Dendritic cell treated with granulocyte-macrophage colony-stimulating factor and Interleukin-4, amounts not matched to agents 40 ng/mL and 50 ng/mL, for 4 days (primary cell): ENCODE measurements at regions of chr3 and their contacts with region 1.

Region 1: GRCh38 chr3:107574650-107575049 is 51.9 kb downstream of the BBX start:
- H3K4me3 Mint-ChIP-seq: no peak overlapping the region
- H3K27ac Mint-ChIP-seq: no peak overlapping the region
- H3K4me1 Mint-ChIP-seq: peaks cover 11% of the 10 kb centered on the region
- H3K27me3 Mint-ChIP-seq: no peaks in the 10 kb centered on the region

Region 2: DNA sequence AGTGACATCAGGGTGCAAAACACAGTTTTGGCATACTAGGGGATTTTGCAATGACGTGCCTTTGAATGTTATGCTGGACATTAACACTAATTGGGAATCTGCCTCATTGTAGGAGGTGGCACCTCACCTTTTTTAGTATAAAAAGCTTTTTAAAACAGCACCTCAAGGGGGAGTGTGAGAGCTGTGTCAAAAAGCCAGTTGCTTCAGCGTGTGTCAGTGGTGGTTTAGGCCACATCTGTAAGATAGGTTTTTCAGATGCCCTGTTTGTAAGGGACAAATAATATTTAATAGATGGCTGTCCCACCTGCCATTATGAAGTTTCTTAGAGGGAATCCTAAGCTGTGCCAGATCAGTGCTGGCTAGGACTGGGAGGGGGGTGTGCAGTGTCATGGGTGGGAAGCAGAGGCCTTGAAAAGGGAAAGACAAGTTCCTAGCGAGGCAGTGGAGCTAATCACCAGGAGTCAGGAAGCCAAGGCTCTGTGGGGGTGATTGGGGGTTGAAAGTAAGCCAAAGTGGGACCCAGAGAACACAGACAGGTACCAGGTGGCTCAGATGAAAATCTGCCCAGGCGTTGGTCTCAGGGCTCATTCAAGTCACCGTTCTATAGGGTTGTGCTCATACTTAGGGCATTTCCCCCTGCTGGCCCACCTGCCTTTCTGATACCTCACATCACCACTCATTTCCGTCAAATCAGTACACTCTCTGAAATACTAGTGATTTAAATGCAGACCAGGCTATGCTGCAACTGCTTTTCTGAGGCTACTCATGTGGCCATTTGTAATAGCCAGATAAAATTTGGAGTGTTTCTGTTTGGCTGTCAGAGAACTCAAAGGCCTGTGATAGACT is 68.6 kb after region 1 on chr3:
- intact Hi-C with region 1: no loop called
- H3K4me3 Mint-ChIP-seq: no peak overlapping the region
- H3K27ac Mint-ChIP-seq: no peak overlapping the region
- H3K4me1 Mint-ChIP-seq: peaks cover 16% of the 10 kb centered on the region
- H3K27me3 Mint-ChIP-seq: no peaks in the 10 kb centered on the region

Region 3: GRCh38 chr3:107740992-107741896 is 166.6 kb after region 1 on chr3:
- intact Hi-C with region 1: loop called (anchors 2 kb)
- H3K4me3 Mint-ChIP-seq: no peak overlapping the region
- H3K27ac Mint-ChIP-seq: no peak overlapping the region
- H3K4me1 Mint-ChIP-seq: peaks cover 11% of the 10 kb centered on the region
- H3K27me3 Mint-ChIP-seq: no peaks in the 10 kb centered on the region

Region 4: GRCh38 chr3:107846279-107846852 is 271.7 kb after region 1 on chr3:
- intact Hi-C with region 1: loop called (anchors 5 kb)
- H3K4me3 Mint-ChIP-seq: no peak overlapping the region
- H3K27ac Mint-ChIP-seq: no peak overlapping the region
- H3K4me1 Mint-ChIP-seq: no peaks in the 10 kb centered on the region
- H3K27me3 Mint-ChIP-seq: no peaks in the 10 kb centered on the region